Left cardiac atrium (tissue), 4 donors: ENCODE measurements at regions of chr7 and their contacts with region 1.

Region 1: GRCh38 chr7:45420843-45421495 is 153.2 kb upstream of the ADCY1 start:
- DNase-seq: no peak
- ATAC-seq: no peak

Region 2: DNA sequence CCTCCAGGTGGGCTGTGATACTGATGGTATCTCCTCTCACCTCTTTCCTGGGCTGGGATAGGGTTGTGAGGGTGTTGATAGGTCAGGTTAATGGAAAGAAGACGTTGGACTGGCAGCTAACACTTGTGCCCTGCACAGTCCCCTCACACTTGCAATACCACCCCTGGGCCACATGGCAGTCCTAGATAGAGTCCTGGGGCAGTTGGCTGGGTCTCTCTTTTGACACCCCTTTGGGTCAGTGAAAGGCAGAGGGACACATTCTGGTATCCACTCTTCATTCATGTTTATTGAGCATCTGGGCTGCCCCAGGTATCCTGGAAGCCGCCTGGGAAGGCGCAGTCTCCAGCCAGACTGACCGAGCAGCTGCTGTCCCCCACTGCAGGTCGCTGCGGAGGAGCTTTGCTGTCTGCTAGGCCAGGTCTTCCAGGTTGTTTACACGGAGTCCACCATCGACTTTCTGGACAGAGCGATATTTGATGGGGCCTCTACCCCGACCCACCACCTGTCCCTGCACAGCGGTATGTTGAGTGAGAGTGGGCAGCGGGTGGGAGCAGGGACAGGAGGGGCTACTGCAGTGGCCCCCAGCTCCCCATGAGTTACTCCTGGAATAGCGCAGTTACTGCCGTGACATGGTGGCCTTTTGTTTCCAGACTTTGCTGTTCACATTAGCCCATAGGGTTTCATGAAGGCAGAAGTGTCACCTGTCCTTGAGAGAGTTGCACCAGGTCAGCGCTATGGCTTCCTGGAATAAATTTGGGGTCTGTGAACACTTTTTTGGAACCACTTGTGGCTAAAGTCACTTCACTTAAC is 351.3 kb before region 1 on chr7:
- intact Hi-C with region 1: no loop called
- DNase-seq: no peak
- ATAC-seq: no peak

Region 3: GRCh38 chr7:45484094-45484493 is 63.1 kb after region 1 on chr7:
- intact Hi-C with region 1: no loop called
- DNase-seq: no peak
- ATAC-seq: no peak

Region 4: GRCh38 chr7:45617166-45617565 is 196.2 kb after region 1 on chr7:
- intact Hi-C with region 1: loop called in 1 of 2 experiments (anchors 10 kb)
- DNase-seq: no peak
- ATAC-seq: no peak